A673 (cell line): ENCODE measurements at regions of chr9 and their contacts with region 1.

Region 1: GRCh38 chr9:131019388-131020239 is 10.6 kb downstream of the LAMC3 start:
- DNase-seq: peak; percentile 50
- H3K4me3 ChIP-seq: no peak overlapping the region
- H3K27ac ChIP-seq: no peak overlapping the region
- H3K4me1 ChIP-seq: no peaks in the 10 kb centered on the region
- H3K27me3 ChIP-seq: peaks cover 12% of the 10 kb centered on the region
- CTCF ChIP-seq: no peak

Region 2: GRCh38 chr9:130732131-130732530 is 287.5 kb before region 1 on chr9:
- CTCF ChIA-PET with region 1: no interaction called
- POLR2A ChIA-PET with region 1: interaction called, 12 read pairs
- intact Hi-C with region 1: no loop called
- DNase-seq: peak; percentile 31
- H3K4me3 ChIP-seq: no peak overlapping the region
- H3K27ac ChIP-seq: no peak overlapping the region
- H3K4me1 ChIP-seq: peaks cover 8% of the 10 kb centered on the region
- H3K27me3 ChIP-seq: no peaks in the 10 kb centered on the region
- CTCF ChIP-seq: peak; percentile 43; the same call in 1 of the 2 replicates

Region 3: DNA sequence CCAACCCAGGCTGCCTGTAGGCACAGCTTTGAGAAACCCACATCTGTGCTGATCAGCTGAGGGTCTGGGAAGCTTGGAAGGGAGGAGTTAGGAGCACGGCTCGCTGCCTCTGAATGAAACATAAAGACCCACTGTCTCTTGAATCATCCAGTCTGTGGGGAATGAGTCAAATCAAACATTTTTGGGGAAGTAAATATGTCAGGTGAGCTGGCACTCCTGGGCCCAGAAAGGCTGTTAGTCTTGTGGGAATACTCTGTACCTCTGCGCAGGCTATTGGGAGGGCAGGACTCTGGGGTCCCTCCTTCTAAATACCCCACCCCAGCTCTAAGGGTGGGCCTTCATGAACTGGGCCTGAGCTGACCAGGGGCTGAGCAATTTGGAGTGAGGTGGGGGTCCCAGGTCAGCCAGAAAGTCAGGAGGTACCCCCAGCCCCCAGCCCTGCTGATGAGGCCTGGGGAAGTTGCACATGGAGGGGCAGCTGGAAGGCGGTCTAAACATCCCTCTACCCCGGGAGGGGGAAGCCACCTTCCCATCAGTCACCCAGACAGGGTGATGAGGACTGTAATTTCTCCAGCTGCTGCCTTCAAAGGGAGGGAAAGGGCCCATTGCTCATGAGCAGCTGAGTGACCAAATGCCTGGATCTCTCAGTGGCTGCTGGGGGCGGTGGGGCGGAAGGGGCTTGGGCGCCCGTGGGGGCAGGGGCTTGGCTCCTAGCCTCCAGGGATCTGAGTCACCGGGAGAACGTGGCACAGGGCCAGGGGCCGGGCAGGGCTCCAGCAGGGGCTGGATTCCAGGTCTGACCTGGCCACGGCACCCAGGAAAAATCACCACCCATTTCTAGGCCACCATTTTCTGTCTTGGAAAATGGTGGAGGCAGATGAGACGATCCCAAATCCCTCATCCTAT is 91.4 kb before region 1 on chr9:
- CTCF ChIA-PET with region 1: no interaction called
- POLR2A ChIA-PET with region 1: no interaction called
- intact Hi-C with region 1: no loop called
- DNase-seq: no peak
- H3K4me3 ChIP-seq: no peak overlapping the region
- H3K27ac ChIP-seq: no peak overlapping the region
- H3K4me1 ChIP-seq: no peaks in the 10 kb centered on the region
- H3K27me3 ChIP-seq: no peaks in the 10 kb centered on the region
- CTCF ChIP-seq: no peak